IMR-90 (cell line): ENCODE measurements at regions of chr5 and their contacts with region 1.

Region 1: GRCh38 chr5:40736103-40736875 is 19.5 kb downstream of the TTC33 start:
- DNase-seq: peak; percentile 74
- ATAC-seq: peak; percentile 74
- H3K4me3 ChIP-seq: no peak overlapping the region
- H3K27ac ChIP-seq: no peak overlapping the region
- H3K4me1 ChIP-seq: peaks cover 14% of the 10 kb centered on the region
- H3K27me3 ChIP-seq: no peaks in the 10 kb centered on the region
- CTCF ChIP-seq: peak; percentile 88
- POLR2A ChIP-seq: no peak
- RAD21 ChIP-seq: peak; percentile 89

Region 2: DNA sequence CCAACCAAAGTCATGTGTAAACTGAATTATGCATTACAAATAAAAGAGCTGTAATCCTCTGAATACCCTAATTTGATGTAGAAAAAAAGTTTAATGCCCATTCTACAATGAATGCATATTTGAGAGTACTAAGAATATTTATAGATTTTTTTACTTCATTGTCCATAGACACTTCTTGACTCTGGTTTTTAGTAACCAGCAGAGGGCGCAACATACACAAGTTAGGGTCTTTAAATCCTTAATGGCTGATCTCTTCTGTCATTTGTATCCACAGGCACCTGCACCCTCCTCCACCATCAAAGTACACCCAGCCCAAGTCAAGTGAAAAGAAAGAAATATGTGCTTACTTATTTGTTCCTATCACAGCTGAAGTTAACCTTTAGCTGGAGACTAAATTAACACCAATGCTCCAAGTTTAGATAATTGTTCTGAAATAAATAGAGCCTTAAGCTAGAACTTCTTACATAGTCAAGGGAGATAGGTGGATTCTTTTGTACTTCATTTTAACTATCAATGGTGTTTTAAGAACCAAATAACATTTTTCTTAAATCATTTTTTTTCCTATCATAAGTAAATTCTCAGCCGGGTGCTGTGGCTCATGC is 787.3 kb before region 1 on chr5:
- CTCF ChIA-PET with region 1: interaction called, 4 read pairs
- POLR2A ChIA-PET with region 1: no interaction called
- dilution Hi-C with region 1: no loop called
- in situ Hi-C with region 1: loop called (anchors 5 kb)
- intact Hi-C with region 1: loop called (anchors 1 kb)
- DNase-seq: peak; percentile 76
- ATAC-seq: peak; percentile 77
- H3K4me3 ChIP-seq: no peak overlapping the region
- H3K27ac ChIP-seq: no peak overlapping the region
- H3K4me1 ChIP-seq: no peaks in the 10 kb centered on the region
- H3K27me3 ChIP-seq: no peaks in the 10 kb centered on the region
- CTCF ChIP-seq: peak; percentile 70
- POLR2A ChIP-seq: no peak
- RAD21 ChIP-seq: peak; percentile 78